ENCODE measurements at regions of chr12 and their contacts with region 1.

Region 1: DNA sequence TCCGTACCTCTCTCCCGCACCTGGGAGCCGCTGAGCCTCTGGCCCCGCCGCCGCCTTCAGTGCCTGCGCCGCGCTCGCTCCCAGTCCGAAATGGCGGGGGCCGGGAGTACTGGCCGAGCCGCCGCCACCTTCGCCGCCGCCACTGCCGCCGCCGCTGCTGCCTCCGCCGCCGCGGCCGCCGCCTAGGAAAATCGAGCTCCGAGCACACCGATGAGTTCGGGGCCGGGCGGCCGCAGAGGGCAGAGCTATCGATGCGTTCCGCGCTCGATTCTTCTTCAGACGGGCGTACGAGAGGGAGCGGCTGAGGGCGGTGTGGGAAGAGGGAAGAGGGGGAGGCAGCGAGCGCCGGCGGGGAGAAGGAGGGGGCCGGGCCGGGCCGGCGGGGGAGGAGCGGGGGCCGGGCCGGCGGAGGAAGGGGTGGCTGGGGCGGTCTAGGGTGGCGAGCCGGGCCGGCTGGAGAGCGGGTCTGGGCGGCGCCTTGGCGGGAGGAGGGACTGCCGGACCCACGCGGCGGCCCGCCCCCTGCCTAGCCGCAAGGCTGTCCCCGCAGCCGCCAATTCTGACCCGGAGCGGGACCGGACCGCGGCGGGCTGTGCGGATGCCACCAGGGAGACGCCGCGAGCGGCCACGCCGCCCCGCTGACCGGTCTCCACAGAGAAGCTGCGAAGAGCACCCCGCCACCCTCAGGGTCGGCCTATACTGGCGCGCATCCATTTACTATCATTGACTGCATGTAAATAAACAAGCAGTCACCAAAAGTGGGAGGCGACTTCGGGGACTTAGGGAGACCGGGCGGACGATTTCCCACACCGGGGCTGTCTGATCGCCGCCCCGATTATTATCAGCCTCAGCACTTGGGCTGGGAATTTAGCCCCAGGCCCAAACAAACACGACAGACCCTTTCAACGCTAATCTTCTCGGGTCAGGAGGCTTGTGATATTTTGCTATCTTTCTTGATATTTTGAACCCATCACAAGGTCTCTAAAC is at the start of gene KRAS:
- DNase-seq: peak; percentile 96 to 98 (median 98)
- ATAC-seq: peak; percentile 97 to 99 (median 98)
- H3K4me3 ChIP-seq: peak within 1 kb of the TSS; percentile 83 to 97 (median 94)
- H3K27ac ChIP-seq: peak within 1 kb of the TSS; percentile 90 to 98 (median 95)
- H3K4me1 ChIP-seq: peaks cover 0 to 30% (median 12%) of the 10 kb centered on the region in 12 donors
- H3K27me3 ChIP-seq: no peaks in the 10 kb centered on the region
- CTCF ChIP-seq: peak in 1 of 12 donors; percentile 13
- POLR2A ChIP-seq: peak; percentile 15 to 54
- total RNA-seq, gene KRAS: 6.3 to 16.0 (median 11.9) TPM

Region 2: GRCh38 chr12:25069224-25069623 is 181.8 kb before region 1 on chr12:
- intact Hi-C with region 1: no loop called
- DNase-seq: no peak
- ATAC-seq: no peak
- H3K4me3 ChIP-seq: no peak overlapping the region
- H3K27ac ChIP-seq: peak overlapping the region in 1 of 12 donors; percentile 22
- H3K4me1 ChIP-seq: peaks cover 0 to 56% (median 0%) of the 10 kb centered on the region in 12 donors
- H3K27me3 ChIP-seq: no peaks in the 10 kb centered on the region
- CTCF ChIP-seq: no peak
- POLR2A ChIP-seq: no peak

Region 3: DNA sequence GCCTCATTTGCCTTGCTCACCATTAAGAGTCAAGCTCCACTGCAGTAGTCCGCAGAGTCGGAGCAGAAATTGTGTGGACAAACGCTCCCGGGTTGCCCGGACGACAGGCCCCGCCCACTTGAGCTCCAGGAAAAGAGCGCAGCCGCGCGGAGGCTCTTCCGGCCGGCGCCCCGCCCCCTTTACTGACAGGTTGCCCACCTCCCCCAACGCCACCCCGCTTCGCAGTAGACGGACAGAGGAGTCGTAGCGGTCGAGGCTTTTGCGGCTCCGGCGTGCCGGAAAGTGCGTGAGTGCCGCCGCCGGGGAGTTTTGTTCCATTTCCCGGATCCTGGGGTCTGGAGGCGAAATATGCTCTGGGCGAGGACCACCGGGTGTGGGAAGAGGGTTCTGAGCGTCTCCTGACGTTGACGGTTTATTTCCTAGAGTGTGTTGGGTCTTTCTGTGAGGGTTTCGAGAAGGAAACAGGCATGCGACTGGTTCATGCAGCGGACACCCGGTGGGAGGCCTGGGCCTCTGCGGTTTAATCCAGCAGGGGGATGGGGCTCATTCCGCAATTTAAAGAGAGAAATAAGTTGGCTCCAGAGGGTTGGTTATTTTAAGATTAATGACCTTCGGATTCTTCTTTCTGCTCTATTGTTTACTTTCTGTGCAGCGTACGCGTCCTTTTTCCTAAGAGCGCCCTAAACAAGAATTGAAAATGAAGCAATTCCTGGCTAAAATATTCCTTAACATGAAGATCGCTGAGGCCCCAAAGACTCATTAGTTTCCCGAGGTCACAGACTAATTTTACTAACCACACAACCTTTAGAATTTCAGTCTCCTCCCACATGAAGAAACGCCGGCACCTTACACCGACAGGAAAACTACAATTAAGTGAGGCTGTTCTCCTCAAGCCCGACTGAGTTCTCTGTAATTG is 55.7 kb before region 1 on chr12 and contains the starts of genes DNAI7 and ETFRF1:
- intact Hi-C with region 1: loop called in 4 of 10 experiments (anchors 2 to 5 kb)
- DNase-seq: peak; percentile 98 to 99 (median 98)
- ATAC-seq: peak; percentile 98 to 100 (median 100)
- H3K4me3 ChIP-seq: peak within 1 kb of the TSS; percentile 49 to 94 (median 73)
- H3K27ac ChIP-seq: peak within 1 kb of the TSS; percentile 60 to 97 (median 94)
- H3K4me1 ChIP-seq: peaks cover 0 to 28% (median 12%) of the 10 kb centered on the region in 12 donors
- H3K27me3 ChIP-seq: no peaks in the 10 kb centered on the region
- CTCF ChIP-seq: peak in 4 of 12 donors; percentile 10 to 16 (median 12)
- POLR2A ChIP-seq: peak; percentile 47 to 92
- total RNA-seq, gene DNAI7: 0.36 to 1.9 (median 0.85) TPM in 8 of 9 donors, not detected in the other
- total RNA-seq, gene ETFRF1: 38.7 to 83.8 (median 52.3) TPM

Region 4: GRCh38 chr12:25377469-25378177 is 126.6 kb after region 1 on chr12:
- intact Hi-C with region 1: loop called in 2 of 10 experiments (anchors 2 to 5 kb)
- DNase-seq: no peak
- ATAC-seq: no peak
- H3K4me3 ChIP-seq: no peak overlapping the region
- H3K27ac ChIP-seq: peak overlapping the region in 1 of 12 donors; percentile 13
- H3K4me1 ChIP-seq: peaks cover 0 to 20% (median 0%) of the 10 kb centered on the region in 12 donors
- H3K27me3 ChIP-seq: no peaks in the 10 kb centered on the region
- CTCF ChIP-seq: no peak
- POLR2A ChIP-seq: no peak

Region 5: DNA sequence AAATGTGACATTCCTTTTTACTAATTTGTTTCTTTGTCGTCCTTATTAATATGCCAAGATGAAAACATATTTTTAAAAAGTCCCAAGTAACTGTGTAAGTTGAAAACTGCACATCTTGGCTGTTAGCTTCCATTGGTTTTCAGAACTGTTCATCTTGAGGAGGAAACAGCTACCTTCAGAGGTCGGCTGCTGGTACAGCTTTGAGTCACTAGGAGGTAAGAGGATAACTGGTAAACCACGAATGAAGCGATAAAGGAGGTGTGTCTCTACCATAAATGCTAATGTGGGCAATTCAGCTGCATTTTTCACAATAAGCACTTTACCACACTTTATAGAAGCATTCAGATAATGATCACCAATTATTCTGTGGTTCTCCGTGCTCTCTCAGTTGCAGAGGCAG is 137.1 kb after region 1 on chr12:
- intact Hi-C with region 1: loop called in 2 of 10 experiments (anchors 2 to 5 kb)
- DNase-seq: no peak
- ATAC-seq: no peak
- H3K4me3 ChIP-seq: no peak overlapping the region
- H3K27ac ChIP-seq: no peak overlapping the region
- H3K4me1 ChIP-seq: peaks cover 0 to 16% (median 6%) of the 10 kb centered on the region in 12 donors
- H3K27me3 ChIP-seq: no peaks in the 10 kb centered on the region
- CTCF ChIP-seq: no peak
- POLR2A ChIP-seq: no peak

Region 6: GRCh38 chr12:26017484-26018206 is 766.6 kb after region 1 on chr12:
- intact Hi-C with region 1: loop called in 1 of 10 experiments (anchors 10 kb)
- DNase-seq: peak in 1 of 5 donors; percentile 21
- ATAC-seq: peak in 3 of 4 donors; percentile 39 to 68 (median 49)
- H3K4me3 ChIP-seq: peak overlapping the region in 1 of 12 donors; percentile 5
- H3K27ac ChIP-seq: peak overlapping the region in 1 of 12 donors; percentile 12
- H3K4me1 ChIP-seq: peaks cover 0 to 42% (median 11%) of the 10 kb centered on the region in 12 donors
- H3K27me3 ChIP-seq: no peaks in the 10 kb centered on the region
- CTCF ChIP-seq: peak; percentile 35 to 75 (median 59)
- POLR2A ChIP-seq: no peak